CD4-positive, alpha-beta T cell (primary cell): ENCODE measurements at regions of chr7 and their contacts with region 1.

Region 1: GRCh38 chr7:128455551-128456254 is at the start of gene HILPDA:
- DNase-seq: peak; percentile 86 to 99 (median 92)
- ATAC-seq: peak; percentile 88
- H3K4me3 ChIP-seq: peak within 1 kb of the TSS; percentile 76
- H3K4me3 Mint-ChIP-seq: peak within 1 kb of the TSS; percentile 90
- H3K27ac ChIP-seq: peak within 1 kb of the TSS; percentile 62 to 67
- H3K27ac Mint-ChIP-seq: peak within 1 kb of the TSS; percentile 88
- H3K4me1 ChIP-seq: peaks cover 28% of the 10 kb centered on the region
- H3K4me1 Mint-ChIP-seq: peaks cover 22% of the 10 kb centered on the region
- H3K27me3 ChIP-seq: no peaks in the 10 kb centered on the region
- H3K27me3 Mint-ChIP-seq: no peaks in the 10 kb centered on the region
- CTCF ChIP-seq: no peak
- total RNA-seq, gene HILPDA: 1.7 TPM

Region 2: DNA sequence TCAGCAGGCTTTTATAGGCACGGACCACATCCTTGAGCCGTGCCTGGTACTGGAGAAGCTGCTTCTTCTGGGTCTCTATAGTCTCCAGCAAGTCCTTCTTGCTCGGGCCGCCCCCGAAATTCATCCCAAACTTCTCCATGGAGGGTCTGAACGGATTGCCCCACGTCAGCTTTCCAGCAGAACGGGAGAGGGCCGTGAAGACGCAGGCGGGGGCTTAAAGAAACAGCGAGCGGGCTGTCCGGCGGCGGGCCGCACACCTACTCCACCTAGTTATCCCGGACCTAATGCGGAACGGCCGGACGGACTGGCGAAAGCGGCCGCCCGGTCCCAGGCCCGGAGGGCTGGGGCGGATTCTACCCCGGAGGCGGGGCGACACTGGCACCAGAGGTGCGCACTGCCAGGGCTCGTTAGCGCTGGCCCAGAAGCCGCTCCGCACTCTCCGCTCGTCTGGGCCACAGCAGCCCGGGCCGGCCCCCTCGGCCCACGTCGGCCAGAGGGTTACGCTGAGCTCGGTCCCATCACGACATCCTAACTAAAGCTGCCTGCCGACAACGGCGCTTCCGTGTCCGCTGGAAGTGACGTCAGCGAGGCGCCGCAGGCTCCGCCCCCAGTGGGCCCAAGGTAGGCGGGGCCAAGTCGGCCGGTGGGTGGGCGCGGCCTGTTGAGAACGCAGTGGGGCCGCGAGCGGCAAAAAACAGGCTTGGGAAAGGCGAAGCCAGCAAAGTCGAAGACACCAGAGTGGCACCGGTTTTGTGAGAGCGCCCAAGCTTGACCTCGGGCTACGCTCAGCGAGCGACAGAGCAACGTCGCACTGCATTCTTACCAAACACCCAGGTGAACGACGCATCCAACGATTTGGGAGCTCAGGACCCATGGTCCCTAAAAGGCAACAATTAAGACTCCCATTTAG is 870.4 kb before region 1 on chr7 and contains the start of gene GCC1:
- CTCF ChIA-PET with region 1: no interaction called
- POLR2A ChIA-PET with region 1: no interaction called
- intact Hi-C with region 1: no loop called
- DNase-seq: peak; percentile 87 to 97 (median 93)
- ATAC-seq: peak; percentile 80
- H3K4me3 ChIP-seq: peak within 1 kb of the TSS; percentile 90
- H3K4me3 Mint-ChIP-seq: peak within 1 kb of the TSS; percentile 96
- H3K27ac ChIP-seq: peak within 1 kb of the TSS; percentile 71 to 72
- H3K27ac Mint-ChIP-seq: peak within 1 kb of the TSS; percentile 92
- H3K4me1 ChIP-seq: peaks cover 73% of the 10 kb centered on the region
- H3K4me1 Mint-ChIP-seq: peaks cover 88% of the 10 kb centered on the region
- H3K27me3 ChIP-seq: no peaks in the 10 kb centered on the region
- H3K27me3 Mint-ChIP-seq: no peaks in the 10 kb centered on the region
- CTCF ChIP-seq: no peak
- total RNA-seq, gene GCC1: 29.8 to 30.6 TPM

Region 3: GRCh38 chr7:128398016-128398840 is 57.5 kb before region 1 on chr7:
- CTCF ChIA-PET with region 1: interaction called, 10 read pairs
- POLR2A ChIA-PET with region 1: no interaction called
- intact Hi-C with region 1: loop called in 1 of 2 experiments (anchors 2 kb)
- DNase-seq: peak in 12 of 14 experiments; percentile 26 to 63 (median 35)
- ATAC-seq: peak; percentile 68
- H3K4me3 ChIP-seq: no peak overlapping the region
- H3K4me3 Mint-ChIP-seq: no peak overlapping the region
- H3K27ac ChIP-seq: no peak overlapping the region
- H3K27ac Mint-ChIP-seq: no peak overlapping the region
- H3K4me1 ChIP-seq: peaks cover 2% of the 10 kb centered on the region
- H3K4me1 Mint-ChIP-seq: peaks cover 5% of the 10 kb centered on the region
- H3K27me3 ChIP-seq: no peaks in the 10 kb centered on the region
- H3K27me3 Mint-ChIP-seq: no peaks in the 10 kb centered on the region
- CTCF ChIP-seq: peak; percentile 98

Region 4: GRCh38 chr7:128409596-128410160 is 46.0 kb before region 1 on chr7 and contains the start of gene IMPDH1:
- CTCF ChIA-PET with region 1: interaction called, 9 read pairs
- POLR2A ChIA-PET with region 1: interaction called, 9 read pairs
- intact Hi-C with region 1: loop called in 1 of 2 experiments (anchors 2 kb)
- DNase-seq: peak; percentile 65 to 91 (median 85)
- ATAC-seq: peak; percentile 72
- H3K4me3 ChIP-seq: peak within 1 kb of the TSS; percentile 95
- H3K4me3 Mint-ChIP-seq: peak within 1 kb of the TSS; percentile 92
- H3K27ac ChIP-seq: peak within 1 kb of the TSS; percentile 66 to 85
- H3K27ac Mint-ChIP-seq: peak within 1 kb of the TSS; percentile 86
- H3K4me1 ChIP-seq: peaks cover 52% of the 10 kb centered on the region
- H3K4me1 Mint-ChIP-seq: peaks cover 44% of the 10 kb centered on the region
- H3K27me3 ChIP-seq: no peaks in the 10 kb centered on the region
- H3K27me3 Mint-ChIP-seq: no peaks in the 10 kb centered on the region
- CTCF ChIP-seq: no peak
- total RNA-seq, gene IMPDH1: 26.5 to 27.0 TPM

Region 5: GRCh38 chr7:128431221-128431620 is 24.5 kb before region 1 on chr7:
- CTCF ChIA-PET with region 1: interaction called, 162 read pairs
- POLR2A ChIA-PET with region 1: interaction called, 16 read pairs
- intact Hi-C with region 1: loop called (anchors 1 kb)
- DNase-seq: no peak
- ATAC-seq: no peak
- H3K4me3 ChIP-seq: no peak overlapping the region
- H3K4me3 Mint-ChIP-seq: no peak overlapping the region
- H3K27ac ChIP-seq: no peak overlapping the region
- H3K27ac Mint-ChIP-seq: no peak overlapping the region
- H3K4me1 ChIP-seq: peaks cover 2% of the 10 kb centered on the region
- H3K4me1 Mint-ChIP-seq: no peaks in the 10 kb centered on the region
- H3K27me3 ChIP-seq: peaks cover 0 to 10% of the 10 kb centered on the region in 2 experiments
- H3K27me3 Mint-ChIP-seq: peaks cover 8% of the 10 kb centered on the region
- CTCF ChIP-seq: no peak

Region 6: GRCh38 chr7:129748356-129749109 is 1292.8 kb after region 1 on chr7:
- CTCF ChIA-PET with region 1: no interaction called
- POLR2A ChIA-PET with region 1: no interaction called
- intact Hi-C with region 1: no loop called
- DNase-seq: no peak
- ATAC-seq: no peak
- H3K4me3 ChIP-seq: no peak overlapping the region
- H3K4me3 Mint-ChIP-seq: no peak overlapping the region
- H3K27ac ChIP-seq: no peak overlapping the region
- H3K27ac Mint-ChIP-seq: no peak overlapping the region
- H3K4me1 ChIP-seq: no peaks in the 10 kb centered on the region
- H3K4me1 Mint-ChIP-seq: no peaks in the 10 kb centered on the region
- H3K27me3 ChIP-seq: no peaks in the 10 kb centered on the region
- H3K27me3 Mint-ChIP-seq: no peaks in the 10 kb centered on the region
- CTCF ChIP-seq: no peak